Gastrocnemius medialis (tissue), 4 donors: ENCODE measurements at regions of chr4 and their contacts with region 1.

Region 1: GRCh38 chr4:141220655-141221605 is at the start of gene ZNF330:
- DNase-seq: peak; percentile 78 to 88
- ATAC-seq: peak; percentile 94 to 95
- H3K4me3 ChIP-seq: peak within 1 kb of the TSS; percentile 98 to 100 (median 98)
- H3K27ac ChIP-seq: peak within 1 kb of the TSS; percentile 98 to 100 (median 100)
- H3K4me1 ChIP-seq: peaks cover 28 to 31% of the 10 kb centered on the region in 2 donors
- H3K27me3 ChIP-seq: no peaks in the 10 kb centered on the region
- CTCF ChIP-seq: peak in 2 of 5 experiments; percentile 4 to 28
- POLR2A ChIP-seq: peak; percentile 93 to 94
- total RNA-seq, gene ZNF330: 24.0 to 54.3 (median 36.1) TPM

Region 2: DNA sequence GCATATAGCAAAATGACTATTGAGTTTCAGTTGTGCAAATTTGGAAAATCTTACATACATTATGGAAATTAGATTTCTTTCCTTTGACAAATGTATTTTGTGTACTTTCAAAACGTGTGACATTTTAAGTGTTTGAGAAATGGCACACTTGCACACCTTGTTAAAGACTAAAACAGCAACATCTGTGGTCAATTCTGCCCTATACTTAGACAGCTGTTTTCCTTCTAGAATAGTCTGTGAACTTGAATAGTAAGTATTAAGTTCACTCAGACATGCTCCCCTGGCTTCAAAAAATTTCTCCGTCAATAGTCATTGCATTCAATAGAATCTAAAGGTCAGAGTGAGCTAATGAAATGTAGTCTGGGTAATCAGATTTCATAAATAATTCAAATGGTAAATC is 443.0 kb before region 1 on chr4:
- in situ Hi-C with region 1: no loop called
- intact Hi-C with region 1: no loop called
- DNase-seq: no peak
- ATAC-seq: no peak
- H3K4me3 ChIP-seq: no peak overlapping the region
- H3K27ac ChIP-seq: no peak overlapping the region
- H3K4me1 ChIP-seq: no peaks in the 10 kb centered on the region
- H3K27me3 ChIP-seq: no peaks in the 10 kb centered on the region
- CTCF ChIP-seq: no peak
- POLR2A ChIP-seq: no peak

Region 3: DNA sequence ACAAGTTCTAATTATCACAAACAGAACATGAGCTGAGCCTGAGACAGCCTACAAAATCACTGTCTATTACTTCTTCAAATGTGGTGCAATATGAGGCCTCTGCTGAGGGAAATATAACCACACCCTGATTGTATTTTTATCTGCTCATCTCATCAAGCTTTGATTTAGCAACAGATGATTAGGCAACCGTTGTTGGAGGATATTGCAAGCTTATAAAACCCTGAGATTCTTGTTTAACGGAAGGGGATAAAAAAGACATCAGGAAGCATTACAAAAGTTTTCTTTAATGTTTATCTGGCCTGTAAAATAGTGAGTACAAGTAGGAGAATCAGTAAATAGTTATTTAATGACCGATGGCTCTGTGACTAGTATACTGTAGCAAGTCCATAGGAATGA is 108.2 kb after region 1 on chr4:
- in situ Hi-C with region 1: no loop called
- intact Hi-C with region 1: loop called (anchors 2 kb)
- DNase-seq: peak in 1 of 2 donors; percentile 8
- ATAC-seq: peak; percentile 95 to 98
- H3K4me3 ChIP-seq: peak overlapping the region in 2 of 4 donors; percentile 4 to 34
- H3K27ac ChIP-seq: peak overlapping the region; percentile 69 to 85 (median 74)
- H3K4me1 ChIP-seq: peaks cover 9 to 17% of the 10 kb centered on the region in 2 donors
- H3K27me3 ChIP-seq: no peaks in the 10 kb centered on the region
- CTCF ChIP-seq: no peak
- POLR2A ChIP-seq: peak in 1 of 2 donors; percentile 20

Region 4: GRCh38 chr4:141636082-141636770 is 415.3 kb after region 1 on chr4 and contains the start of gene IL15:
- in situ Hi-C with region 1: no loop called
- intact Hi-C with region 1: loop called (anchors 5 kb)
- DNase-seq: peak; percentile 52 to 85
- ATAC-seq: peak; percentile 88 to 90
- H3K4me3 ChIP-seq: peak within 1 kb of the TSS; percentile 68 to 97 (median 84)
- H3K27ac ChIP-seq: peak within 1 kb of the TSS; percentile 81 to 89 (median 86)
- H3K4me1 ChIP-seq: peaks cover 19 to 26% of the 10 kb centered on the region in 2 donors
- H3K27me3 ChIP-seq: no peaks in the 10 kb centered on the region
- CTCF ChIP-seq: no peak
- POLR2A ChIP-seq: no peak
- total RNA-seq, gene IL15: 2.1 to 6.1 (median 2.7) TPM

Region 5: GRCh38 chr4:143184217-143185116 is 1963.5 kb after region 1 on chr4 and contains the start of gene USP38:
- in situ Hi-C with region 1: no loop called
- intact Hi-C with region 1: loop called (anchors 5 kb)
- DNase-seq: peak; percentile 94 to 96
- ATAC-seq: peak; percentile 81 to 93
- H3K4me3 ChIP-seq: peak within 1 kb of the TSS; percentile 73 to 94 (median 91)
- H3K27ac ChIP-seq: peak within 1 kb of the TSS; percentile 95 to 98 (median 96)
- H3K4me1 ChIP-seq: peaks cover 29 to 37% of the 10 kb centered on the region in 2 donors
- H3K27me3 ChIP-seq: no peaks in the 10 kb centered on the region
- CTCF ChIP-seq: peak in 2 of 5 experiments; percentile 9 to 28
- POLR2A ChIP-seq: peak; percentile 82 to 91
- total RNA-seq, gene USP38: 63.6 to 142 (median 102) TPM